HepG2 (cell line): ENCODE measurements at regions of chr6 and their contacts with region 1.

Region 1: DNA sequence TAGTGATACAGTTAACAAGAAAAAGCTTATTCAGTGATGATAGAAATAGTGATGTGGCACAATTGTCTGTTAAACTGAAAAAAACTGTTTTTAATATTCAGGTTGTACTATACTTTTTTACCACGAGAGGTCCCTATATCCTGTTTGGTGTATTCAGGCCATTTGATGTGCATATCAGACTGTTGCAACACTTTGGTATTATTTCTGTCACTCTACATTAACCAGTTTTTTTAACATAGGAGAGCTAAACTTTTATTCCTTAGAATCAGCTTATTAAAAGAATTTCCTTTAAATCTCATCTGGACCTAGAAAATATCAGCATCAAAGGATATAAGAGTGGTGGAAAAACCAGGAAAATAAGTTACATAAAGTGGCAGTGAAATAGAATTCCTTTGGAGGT is 36.8 kb downstream of the TSPYL4 start:
- DNase-seq: peak; percentile 56
- ATAC-seq: peak; percentile 76
- H3K4me3 ChIP-seq: no peak overlapping the region
- H3K27ac ChIP-seq: no peak overlapping the region
- H3K4me1 ChIP-seq: peaks cover 11% of the 10 kb centered on the region
- H3K27me3 ChIP-seq: no peaks in the 10 kb centered on the region
- CTCF ChIP-seq: peak; percentile 61
- EP300 ChIP-seq: no peak
- POLR2A ChIP-seq: no peak
- RAD21 ChIP-seq: no peak

Region 2: DNA sequence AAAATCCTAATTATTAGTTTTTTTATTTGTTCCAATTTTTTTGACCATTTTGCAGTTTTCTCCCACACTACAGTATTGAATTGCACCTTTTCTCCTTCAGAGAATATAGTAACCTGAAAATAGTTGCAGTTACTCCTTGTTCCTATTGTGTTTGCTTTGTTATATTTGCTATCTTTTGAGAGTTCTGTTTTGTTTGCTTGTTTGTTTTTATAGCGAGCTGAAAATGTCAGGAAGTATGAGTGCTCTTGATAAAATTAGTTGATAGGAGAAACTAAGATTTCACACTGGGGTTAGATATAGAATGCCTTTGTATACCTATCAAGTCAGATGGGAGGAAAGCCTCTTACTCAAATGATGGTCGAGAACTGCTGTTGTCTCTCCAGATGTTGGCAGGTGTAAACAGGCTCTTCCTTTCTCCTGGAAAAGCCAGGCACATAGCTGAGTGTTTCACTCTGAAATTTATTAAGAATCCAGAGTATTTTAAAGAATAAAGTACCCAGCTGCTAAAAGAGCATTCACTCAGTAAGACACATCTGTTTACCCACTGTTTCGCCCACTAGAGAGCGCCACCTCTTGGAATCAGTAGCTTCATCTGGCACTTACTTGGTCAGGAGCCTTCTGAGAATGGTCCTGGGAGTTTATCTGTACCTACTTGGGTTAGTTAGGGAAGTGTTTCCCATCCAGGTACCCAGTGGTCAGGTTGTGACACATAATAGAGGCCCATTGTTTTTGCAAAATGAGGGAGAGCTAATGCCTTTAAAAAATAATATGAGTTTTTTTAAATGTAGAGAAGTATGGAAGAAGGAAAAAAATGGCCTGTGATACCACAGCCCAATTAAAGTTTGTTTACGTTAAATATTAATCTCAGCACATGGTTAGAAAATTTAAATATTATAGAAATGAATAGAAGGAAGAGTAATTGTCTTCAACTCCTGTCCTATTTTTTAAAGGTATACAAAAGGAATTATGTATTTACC is 105.2 kb before region 1 on chr6:
- CTCF ChIA-PET with region 1: no interaction called
- POLR2A ChIA-PET with region 1: no interaction called
- in situ Hi-C with region 1: no loop called
- intact Hi-C with region 1: loop called (anchors 10 kb)
- DNase-seq: peak; percentile 60
- ATAC-seq: peak; percentile 94
- H3K4me3 ChIP-seq: no peak overlapping the region
- H3K27ac ChIP-seq: no peak overlapping the region
- H3K4me1 ChIP-seq: peaks cover 8% of the 10 kb centered on the region
- H3K27me3 ChIP-seq: no peaks in the 10 kb centered on the region
- CTCF ChIP-seq: peak; percentile 76
- EP300 ChIP-seq: no peak
- POLR2A ChIP-seq: no peak
- RAD21 ChIP-seq: no peak

Region 3: DNA sequence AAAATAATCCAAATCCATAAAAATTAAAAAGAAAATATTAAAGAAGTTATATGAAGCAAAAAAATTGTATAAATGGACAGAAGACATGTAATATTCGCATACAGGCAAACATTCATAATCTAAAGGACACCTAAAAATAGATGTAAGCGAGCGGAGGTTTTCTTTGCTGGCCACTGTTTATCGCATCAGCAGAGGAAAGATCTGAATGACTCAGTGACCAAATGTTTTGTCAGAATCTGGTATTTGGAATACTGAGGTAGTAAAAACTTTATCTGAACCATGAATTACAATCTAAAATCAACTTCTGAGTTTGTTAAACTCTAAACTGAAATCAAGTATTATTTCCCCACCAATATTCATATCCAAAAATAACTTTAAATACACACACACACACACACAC is 29.0 kb after region 1 on chr6:
- CTCF ChIA-PET with region 1: no interaction called
- POLR2A ChIA-PET with region 1: no interaction called
- in situ Hi-C with region 1: no loop called
- intact Hi-C with region 1: loop called (anchors 2 kb)
- DNase-seq: no peak
- ATAC-seq: no peak
- H3K4me3 ChIP-seq: no peak overlapping the region
- H3K27ac ChIP-seq: no peak overlapping the region
- H3K4me1 ChIP-seq: peaks cover 38% of the 10 kb centered on the region
- H3K27me3 ChIP-seq: no peaks in the 10 kb centered on the region
- CTCF ChIP-seq: no peak
- EP300 ChIP-seq: no peak
- POLR2A ChIP-seq: no peak
- RAD21 ChIP-seq: no peak

Region 4: DNA sequence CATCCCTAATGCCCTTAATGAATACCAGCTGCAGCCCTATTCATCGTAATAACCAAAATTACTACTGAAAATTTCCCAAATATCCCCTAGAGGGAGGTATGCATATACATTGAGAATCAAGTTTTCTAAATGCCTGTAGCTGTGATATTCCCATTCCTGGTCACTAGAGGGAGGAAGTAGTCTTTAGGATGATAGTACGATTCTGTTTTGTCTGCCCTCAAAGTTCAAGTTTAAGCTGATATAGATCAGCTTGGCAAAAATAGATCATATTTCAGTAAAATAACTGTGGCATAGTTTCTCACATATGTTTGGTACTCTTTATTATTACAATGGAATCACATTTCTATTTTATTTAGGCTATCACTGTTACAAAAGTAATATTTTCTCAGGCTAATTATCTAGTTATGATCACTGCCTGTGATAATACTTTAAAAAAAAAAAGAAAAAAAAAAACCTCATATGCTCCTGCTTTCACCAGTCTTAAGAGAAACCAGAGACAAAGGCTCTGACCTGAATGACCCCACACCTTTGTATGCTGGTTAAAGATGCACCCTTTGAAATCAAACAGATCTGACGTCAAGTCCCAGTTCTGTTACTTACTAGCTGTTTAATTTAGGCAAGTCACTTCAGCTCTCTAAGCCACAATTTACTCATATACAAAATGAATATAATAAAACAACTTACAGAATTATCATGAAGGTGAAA is 51.7 kb after region 1 on chr6:
- CTCF ChIA-PET with region 1: interaction called, 29 read pairs
- POLR2A ChIA-PET with region 1: no interaction called
- in situ Hi-C with region 1: no loop called
- intact Hi-C with region 1: loop called (anchors 1 kb)
- DNase-seq: peak; percentile 88
- ATAC-seq: peak; percentile 93
- H3K4me3 ChIP-seq: no peak overlapping the region
- H3K27ac ChIP-seq: no peak overlapping the region
- H3K4me1 ChIP-seq: 0 out of 2 replicates have a peak, but pooled peaks cover 5% of the 10 kb centered on the region
- H3K27me3 ChIP-seq: no peaks in the 10 kb centered on the region
- CTCF ChIP-seq: peak; percentile 86
- EP300 ChIP-seq: no peak
- POLR2A ChIP-seq: no peak
- RAD21 ChIP-seq: peak; percentile 73

Region 5: GRCh38 chr6:116561377-116562018 is 344.4 kb after region 1 on chr6:
- CTCF ChIA-PET with region 1: interaction called, 11 read pairs
- POLR2A ChIA-PET with region 1: no interaction called
- in situ Hi-C with region 1: no loop called
- intact Hi-C with region 1: no loop called
- DNase-seq: peak; percentile 70
- ATAC-seq: peak; percentile 78
- H3K4me3 ChIP-seq: peak overlapping the region in 2 of 3 experiments; percentile 13 to 28; a peak in 2 of 6 replicates
- H3K27ac ChIP-seq: no peak overlapping the region
- H3K4me1 ChIP-seq: peaks cover 31% of the 10 kb centered on the region
- H3K27me3 ChIP-seq: no peaks in the 10 kb centered on the region; a peak in 3 of 5 replicates
- CTCF ChIP-seq: peak; percentile 91
- EP300 ChIP-seq: no peak
- POLR2A ChIP-seq: no peak
- RAD21 ChIP-seq: peak; percentile 78

Region 6: DNA sequence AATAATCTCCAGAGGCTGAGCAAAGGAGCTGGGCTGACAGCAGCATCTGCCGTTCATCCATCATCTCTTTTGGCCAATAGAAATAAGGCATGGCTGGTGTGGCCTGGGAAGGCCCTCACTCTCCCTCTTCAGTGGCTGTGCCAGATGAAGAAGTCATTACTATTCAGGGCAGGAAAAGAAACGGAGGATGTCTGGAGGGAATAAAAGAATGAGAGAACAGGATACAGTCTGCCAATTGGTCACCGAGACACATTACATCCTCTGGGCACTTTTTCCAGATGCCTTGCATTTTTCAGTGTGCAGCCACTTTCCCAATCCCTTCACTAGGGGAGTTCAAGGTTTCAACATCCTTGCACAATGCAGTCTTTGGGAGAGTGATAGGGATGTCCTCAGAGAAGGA is 1016.1 kb after region 1 on chr6:
- CTCF ChIA-PET with region 1: no interaction called
- POLR2A ChIA-PET with region 1: no interaction called
- in situ Hi-C with region 1: no loop called
- intact Hi-C with region 1: no loop called
- DNase-seq: no peak
- ATAC-seq: peak; percentile 27; the same call in 1 of the 3 replicates
- H3K4me3 ChIP-seq: no peak overlapping the region
- H3K27ac ChIP-seq: no peak overlapping the region
- H3K4me1 ChIP-seq: peaks cover 7% of the 10 kb centered on the region
- H3K27me3 ChIP-seq: no peaks in the 10 kb centered on the region
- CTCF ChIP-seq: no peak
- EP300 ChIP-seq: no peak
- POLR2A ChIP-seq: no peak
- RAD21 ChIP-seq: no peak